HepG2 (cell line): ENCODE measurements at regions of chr4 and their contacts with region 1.

Region 1: GRCh38 chr4:106126062-106126461 is 189.9 kb downstream of the TBCK start:
- DNase-seq: no peak
- ATAC-seq: no peak
- H3K4me3 ChIP-seq: no peak overlapping the region
- H3K27ac ChIP-seq: no peak overlapping the region
- H3K4me1 ChIP-seq: no peaks in the 10 kb centered on the region
- H3K27me3 ChIP-seq: no peaks in the 10 kb centered on the region
- CTCF ChIP-seq: no peak
- EP300 ChIP-seq: no peak
- POLR2A ChIP-seq: no peak
- RAD21 ChIP-seq: no peak

Region 2: GRCh38 chr4:105878668-105879067 is 247.4 kb before region 1 on chr4:
- CTCF ChIA-PET with region 1: no interaction called
- POLR2A ChIA-PET with region 1: no interaction called
- in situ Hi-C with region 1: no loop called
- intact Hi-C with region 1: no loop called
- DNase-seq: no peak
- ATAC-seq: no peak
- H3K4me3 ChIP-seq: no peak overlapping the region
- H3K27ac ChIP-seq: no peak overlapping the region
- H3K4me1 ChIP-seq: no peaks in the 10 kb centered on the region
- H3K27me3 ChIP-seq: no peaks in the 10 kb centered on the region
- CTCF ChIP-seq: no peak
- EP300 ChIP-seq: no peak
- POLR2A ChIP-seq: no peak
- RAD21 ChIP-seq: no peak

Region 3: GRCh38 chr4:106019771-106020170 is 106.3 kb before region 1 on chr4:
- CTCF ChIA-PET with region 1: no interaction called
- POLR2A ChIA-PET with region 1: no interaction called
- in situ Hi-C with region 1: no loop called
- intact Hi-C with region 1: no loop called
- DNase-seq: no peak
- ATAC-seq: no peak
- H3K4me3 ChIP-seq: no peak overlapping the region
- H3K27ac ChIP-seq: no peak overlapping the region
- H3K4me1 ChIP-seq: no peaks in the 10 kb centered on the region
- H3K27me3 ChIP-seq: no peaks in the 10 kb centered on the region
- CTCF ChIP-seq: no peak
- EP300 ChIP-seq: no peak
- POLR2A ChIP-seq: no peak
- RAD21 ChIP-seq: no peak

Region 4: GRCh38 chr4:106095408-106095807 is 30.7 kb before region 1 on chr4:
- CTCF ChIA-PET with region 1: no interaction called
- POLR2A ChIA-PET with region 1: no interaction called
- in situ Hi-C with region 1: no loop called
- intact Hi-C with region 1: no loop called
- DNase-seq: peak; percentile 32
- ATAC-seq: no peak
- H3K4me3 ChIP-seq: no peak overlapping the region
- H3K27ac ChIP-seq: no peak overlapping the region
- H3K4me1 ChIP-seq: no peaks in the 10 kb centered on the region
- H3K27me3 ChIP-seq: no peaks in the 10 kb centered on the region; a peak in 1 of 5 replicates
- CTCF ChIP-seq: no peak
- EP300 ChIP-seq: no peak
- POLR2A ChIP-seq: no peak
- RAD21 ChIP-seq: no peak

Region 5: GRCh38 chr4:106105697-106106096 is 20.4 kb before region 1 on chr4:
- CTCF ChIA-PET with region 1: no interaction called
- POLR2A ChIA-PET with region 1: no interaction called
- in situ Hi-C with region 1: no loop called
- intact Hi-C with region 1: loop called (anchors 1 kb)
- DNase-seq: no peak
- ATAC-seq: no peak
- H3K4me3 ChIP-seq: no peak overlapping the region
- H3K27ac ChIP-seq: no peak overlapping the region
- H3K4me1 ChIP-seq: no peaks in the 10 kb centered on the region
- H3K27me3 ChIP-seq: no peaks in the 10 kb centered on the region
- CTCF ChIP-seq: no peak
- EP300 ChIP-seq: no peak
- POLR2A ChIP-seq: no peak
- RAD21 ChIP-seq: no peak